ENCODE measurements at regions of chr1 and their contacts with region 1.

Region 1: GRCh38 chr1:214328770-214329469 is 48.0 kb downstream of the SMYD2 start:
- DNase-seq: peak; percentile 95
- H3K4me3 Mint-ChIP-seq: no peak overlapping the region
- H3K27ac Mint-ChIP-seq: no peak overlapping the region
- H3K4me1 Mint-ChIP-seq: no peaks in the 10 kb centered on the region
- H3K27me3 Mint-ChIP-seq: no peaks in the 10 kb centered on the region
- CTCF ChIP-seq: peak; percentile 100

Region 2: GRCh38 chr1:213953806-213954205 is 375.1 kb before region 1 on chr1:
- CTCF ChIA-PET with region 1: no interaction called
- POLR2A ChIA-PET with region 1: no interaction called
- intact Hi-C with region 1: no loop called
- DNase-seq: no peak
- H3K4me3 Mint-ChIP-seq: no peak overlapping the region
- H3K27ac Mint-ChIP-seq: no peak overlapping the region
- H3K4me1 Mint-ChIP-seq: no peaks in the 10 kb centered on the region
- H3K27me3 Mint-ChIP-seq: peaks cover 90% of the 10 kb centered on the region
- CTCF ChIP-seq: no peak

Region 3: GRCh38 chr1:214198571-214198970 is 130.3 kb before region 1 on chr1:
- CTCF ChIA-PET with region 1: interaction called, 58 read pairs
- POLR2A ChIA-PET with region 1: no interaction called
- intact Hi-C with region 1: no loop called
- DNase-seq: no peak
- H3K4me3 Mint-ChIP-seq: no peak overlapping the region
- H3K27ac Mint-ChIP-seq: no peak overlapping the region
- H3K4me1 Mint-ChIP-seq: no peaks in the 10 kb centered on the region
- H3K27me3 Mint-ChIP-seq: peaks cover 47% of the 10 kb centered on the region
- CTCF ChIP-seq: no peak

Region 4: DNA sequence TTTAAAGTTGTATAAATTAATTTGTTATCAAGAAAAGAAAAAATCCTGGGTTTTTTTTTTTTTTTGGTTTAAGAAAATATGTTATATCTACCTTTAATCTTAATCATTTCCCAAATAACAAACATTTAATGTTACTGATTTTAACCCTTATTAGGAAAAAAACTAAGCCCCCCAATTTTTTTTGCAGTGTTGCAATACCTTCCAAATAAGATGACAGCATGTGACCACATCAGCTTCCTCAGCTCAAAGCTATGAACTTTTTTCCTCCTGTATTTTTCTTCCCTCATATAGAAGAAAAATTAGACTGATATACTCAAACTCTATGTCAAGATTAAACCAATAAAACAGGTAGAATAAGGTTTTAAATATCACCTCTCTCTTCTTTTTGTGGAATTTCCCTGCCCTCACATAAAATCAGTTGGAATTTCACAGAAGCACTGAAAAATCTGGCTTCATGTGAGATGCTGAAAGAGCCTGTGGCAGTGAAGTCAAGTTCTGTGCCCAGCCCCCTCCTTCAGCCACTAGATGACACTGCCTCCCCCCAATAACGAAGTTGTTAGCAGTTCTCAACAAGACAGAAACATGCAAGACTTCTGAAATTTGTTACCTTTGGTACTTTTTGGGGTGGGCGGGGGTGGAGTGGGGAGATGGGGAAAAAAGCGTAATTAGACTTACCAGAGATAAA is 57.6 kb before region 1 on chr1:
- CTCF ChIA-PET with region 1: interaction called, 136 read pairs
- POLR2A ChIA-PET with region 1: interaction called, 5 read pairs
- intact Hi-C with region 1: no loop called
- DNase-seq: no peak
- H3K4me3 Mint-ChIP-seq: no peak overlapping the region
- H3K27ac Mint-ChIP-seq: no peak overlapping the region
- H3K4me1 Mint-ChIP-seq: no peaks in the 10 kb centered on the region
- H3K27me3 Mint-ChIP-seq: peaks cover 58% of the 10 kb centered on the region
- CTCF ChIP-seq: no peak

Region 5: GRCh38 chr1:214386747-214387146 is 57.8 kb after region 1 on chr1:
- CTCF ChIA-PET with region 1: interaction called, 17 read pairs
- POLR2A ChIA-PET with region 1: no interaction called
- intact Hi-C with region 1: no loop called
- DNase-seq: peak; percentile 83
- H3K4me3 Mint-ChIP-seq: no peak overlapping the region
- H3K27ac Mint-ChIP-seq: peak overlapping the region; percentile 76
- H3K4me1 Mint-ChIP-seq: peaks cover 14% of the 10 kb centered on the region
- H3K27me3 Mint-ChIP-seq: no peaks in the 10 kb centered on the region
- CTCF ChIP-seq: no peak

Region 6: DNA sequence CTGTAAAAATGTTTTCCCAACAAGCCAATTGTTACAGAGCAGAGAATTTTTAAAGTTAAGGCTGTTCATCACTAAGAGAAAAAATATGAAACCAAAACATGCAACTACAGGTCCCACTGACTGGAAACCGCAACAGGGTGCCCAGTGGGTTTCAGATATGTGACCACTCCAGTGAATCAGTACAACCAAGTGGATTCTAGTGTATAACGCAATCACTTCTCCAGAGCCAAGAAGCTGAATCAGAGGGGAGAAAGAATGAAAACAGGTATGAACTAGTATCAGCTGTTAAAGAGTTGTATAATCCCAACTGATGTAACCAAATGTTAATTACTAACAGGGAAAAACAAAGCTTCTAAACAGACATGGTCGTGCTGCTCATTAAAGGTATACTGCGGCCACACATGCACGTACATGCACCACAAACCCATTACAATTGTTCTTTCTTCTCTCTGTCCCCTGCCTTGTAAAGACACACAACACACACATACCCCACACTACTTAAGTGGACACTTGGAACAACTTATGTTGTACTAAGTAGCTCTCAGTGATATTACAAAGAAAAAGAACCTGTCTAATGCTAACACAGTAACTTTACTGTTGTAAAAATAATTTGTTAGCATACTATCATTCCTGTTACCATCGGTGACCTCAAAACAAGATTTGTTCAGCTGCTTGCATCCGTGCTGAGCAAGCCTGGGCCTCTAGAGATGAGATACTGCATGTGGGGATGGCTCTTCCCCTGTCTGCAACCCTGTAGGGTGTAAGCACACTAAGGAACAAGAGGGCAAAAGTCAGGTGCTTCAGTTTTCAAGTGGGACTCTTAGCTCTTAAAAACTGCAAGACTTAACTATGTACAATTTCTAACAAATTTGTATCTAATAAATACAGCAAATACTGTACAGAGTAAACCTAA is 148.3 kb after region 1 on chr1:
- CTCF ChIA-PET with region 1: interaction called, 53 read pairs
- POLR2A ChIA-PET with region 1: interaction called, 4 read pairs
- intact Hi-C with region 1: no loop called
- DNase-seq: peak; percentile 100
- H3K4me3 Mint-ChIP-seq: peak overlapping the region; percentile 65
- H3K27ac Mint-ChIP-seq: peak overlapping the region; percentile 88
- H3K4me1 Mint-ChIP-seq: peaks cover 68% of the 10 kb centered on the region
- H3K27me3 Mint-ChIP-seq: no peaks in the 10 kb centered on the region
- CTCF ChIP-seq: no peak

Region 7: DNA sequence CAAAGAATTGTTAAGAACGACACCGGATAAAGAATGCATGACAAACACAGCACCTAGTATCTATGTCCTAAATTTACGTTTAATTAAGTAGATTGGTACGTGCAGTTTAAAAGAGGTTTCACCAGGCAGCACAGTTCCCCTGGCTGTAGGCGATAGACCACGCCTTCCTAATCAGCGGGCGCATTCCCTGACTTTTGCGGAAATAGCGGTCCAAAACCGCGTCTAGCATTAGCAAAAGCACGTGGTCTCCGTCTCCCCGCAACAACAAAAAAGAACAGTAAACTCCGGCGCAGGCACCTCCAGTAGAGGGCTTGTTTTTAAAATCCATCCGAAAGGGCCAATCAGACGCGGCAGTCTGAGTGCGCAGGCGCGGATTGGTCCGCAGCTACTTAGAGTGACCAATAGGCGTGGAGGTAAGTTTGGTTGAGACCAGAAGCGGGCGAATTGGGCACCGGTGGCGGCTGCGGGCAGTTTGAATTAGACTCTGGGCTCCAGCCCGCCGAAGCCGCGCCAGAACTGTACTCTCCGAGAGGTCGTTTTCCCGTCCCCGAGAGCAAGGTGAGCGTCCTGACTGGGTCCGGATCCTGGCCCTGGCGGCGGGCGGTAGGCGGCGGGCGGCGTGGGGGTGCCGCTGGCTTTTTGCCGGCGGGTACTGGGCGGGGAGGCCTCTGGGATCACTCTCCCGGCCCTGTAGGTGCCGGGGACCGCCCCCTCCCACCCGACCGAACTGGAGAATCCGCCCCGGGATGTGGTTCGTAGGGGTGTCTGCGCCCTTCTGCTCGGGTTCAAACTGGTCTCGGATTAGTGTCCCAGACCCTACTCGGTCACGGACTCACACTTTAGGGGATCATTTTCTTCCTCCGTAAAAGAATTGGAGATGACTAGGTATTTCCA is 274.1 kb after region 1 on chr1 and contains the start of gene CENPF:
- CTCF ChIA-PET with region 1: interaction called, 74 read pairs
- POLR2A ChIA-PET with region 1: no interaction called
- intact Hi-C with region 1: loop called (anchors 1 kb)
- DNase-seq: peak; percentile 100
- H3K4me3 Mint-ChIP-seq: peak within 1 kb of the TSS; percentile 96
- H3K27ac Mint-ChIP-seq: peak within 1 kb of the TSS; percentile 94
- H3K4me1 Mint-ChIP-seq: peaks cover 16% of the 10 kb centered on the region
- H3K27me3 Mint-ChIP-seq: no peaks in the 10 kb centered on the region
- CTCF ChIP-seq: peak; percentile 28
- total RNA-seq, gene CENPF: 88.8 and 135 TPM in 2 replicates